Astrocyte of the cerebellum (primary cell): ENCODE measurements at regions of chr1 and their contacts with region 1.

Region 1: GRCh38 chr1:218401998-218402785 is 57.1 kb downstream of the TGFB2 start:
- DNase-seq: no peak
- H3K4me3 ChIP-seq: no peak overlapping the region
- CTCF ChIP-seq: no peak

Region 2: GRCh38 chr1:218369688-218370511 is 32.3 kb before region 1 on chr1:
- in situ Hi-C with region 1: loop called (anchors 5 kb)
- DNase-seq: no peak
- H3K4me3 ChIP-seq: no peak overlapping the region
- CTCF ChIP-seq: no peak

Region 3: GRCh38 chr1:218439541-218440295 is 37.5 kb after region 1 on chr1:
- in situ Hi-C with region 1: loop called (anchors 5 kb)
- DNase-seq: peak; percentile 79
- H3K4me3 ChIP-seq: no peak overlapping the region
- CTCF ChIP-seq: peak; percentile 29